Activated naive CD4-positive, alpha-beta T cell treated with anti-CD3 and anti-CD28 coated beads for 36 hours (primary cell): ENCODE measurements at regions of chr21 and their contacts with region 1.

Region 1: DNA sequence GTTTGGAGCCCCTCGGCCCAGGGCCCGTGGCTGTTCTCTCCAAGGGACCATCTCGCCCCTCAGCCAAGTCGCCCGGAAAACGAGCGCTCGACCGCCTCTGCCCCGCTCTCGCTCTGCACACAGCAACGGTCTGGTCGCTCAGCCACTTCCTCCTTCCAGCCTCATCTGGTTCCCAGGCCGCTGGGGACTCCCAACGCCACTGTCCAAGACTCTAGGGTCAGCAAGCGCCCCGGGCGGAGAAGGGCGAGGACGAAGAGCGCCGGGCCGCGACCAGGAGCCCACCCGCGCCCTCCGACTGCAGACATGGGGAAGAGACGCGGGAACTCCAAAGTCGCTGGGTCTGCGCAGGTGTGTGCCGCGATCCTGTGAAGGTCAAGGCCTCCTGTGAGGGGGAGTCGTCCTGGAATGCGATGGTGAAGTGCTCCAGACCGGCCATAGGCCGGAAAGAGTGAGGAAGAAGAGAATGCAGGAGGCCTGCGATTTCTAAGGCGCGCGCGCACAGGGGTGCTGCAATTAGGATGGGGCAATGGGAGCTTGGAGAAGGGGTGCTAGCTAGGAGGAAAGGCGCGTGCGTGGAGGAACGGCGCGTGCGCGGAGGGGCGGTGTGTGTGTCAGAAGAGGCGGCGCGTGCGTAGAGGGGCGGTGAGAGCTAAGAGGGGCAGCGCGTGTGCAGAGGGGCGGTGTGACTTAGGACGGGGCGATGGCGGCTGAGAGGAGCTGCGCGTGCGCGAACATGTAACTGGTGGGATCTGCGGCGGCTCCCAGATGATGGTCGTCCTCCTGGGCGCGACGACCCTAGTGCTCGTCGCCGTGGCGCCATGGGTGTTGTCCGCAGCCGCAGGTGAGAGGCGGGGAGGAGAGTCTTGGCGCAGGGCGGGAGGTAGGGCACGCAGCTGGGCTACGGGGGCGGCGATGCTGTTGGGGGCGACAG is at the start of gene IFNAR1:
- DNase-seq: peak; percentile 99
- H3K4me3 Mint-ChIP-seq: no peak within 1 kb of the TSS
- H3K27ac Mint-ChIP-seq: no peak within 1 kb of the TSS
- H3K4me1 Mint-ChIP-seq: peaks cover 28% of the 10 kb centered on the region
- H3K27me3 Mint-ChIP-seq: no peaks in the 10 kb centered on the region
- total RNA-seq, gene IFNAR1: 20.6 to 24.3 TPM

Region 2: DNA sequence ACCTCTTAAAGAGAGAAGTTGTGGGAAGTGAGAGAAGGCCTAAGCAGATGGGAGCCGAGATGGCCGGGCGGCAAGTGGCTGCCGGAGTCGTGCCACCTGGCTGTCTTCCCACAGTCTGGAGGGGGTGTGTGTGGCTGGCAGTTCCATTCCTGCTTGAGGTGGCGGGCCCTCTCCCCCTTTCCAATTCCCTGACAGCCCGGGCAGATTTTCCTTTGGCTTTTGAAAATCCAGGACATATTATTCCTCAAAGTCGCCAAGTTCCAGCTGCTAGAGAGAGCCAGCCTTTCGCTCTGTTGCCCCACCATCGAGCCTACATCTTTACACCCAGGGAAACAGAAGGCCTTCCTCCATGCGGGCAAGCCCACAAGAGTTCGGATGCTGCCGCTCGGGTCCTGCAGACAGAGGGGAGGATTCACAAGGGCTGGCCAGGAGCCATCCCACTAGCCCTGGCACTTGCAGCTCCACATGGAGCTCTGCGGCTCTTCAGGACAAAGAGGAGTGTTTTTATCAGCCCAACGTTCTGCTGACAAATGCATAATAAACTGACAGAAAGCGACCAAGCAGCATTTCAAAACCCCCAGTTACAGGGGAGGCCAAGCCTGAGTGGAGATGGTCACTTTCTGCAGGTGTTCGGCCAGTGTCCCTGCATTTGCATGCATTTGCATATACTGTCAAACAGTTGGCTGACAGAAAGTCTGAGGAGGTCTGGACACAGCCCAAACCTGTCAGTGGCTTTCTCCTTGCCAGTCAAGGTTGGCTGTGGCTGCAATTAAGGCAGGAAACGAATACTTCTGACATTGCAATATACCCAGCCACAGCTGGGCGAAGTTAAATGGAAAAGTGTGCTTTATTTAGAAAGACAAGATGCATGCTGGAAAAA is 208.7 kb before region 1 on chr21:
- CTCF ChIA-PET with region 1: no interaction called
- intact Hi-C with region 1: no loop called
- DNase-seq: no peak
- H3K4me3 Mint-ChIP-seq: no peak overlapping the region
- H3K27ac Mint-ChIP-seq: no peak overlapping the region
- H3K4me1 Mint-ChIP-seq: peaks cover 20% of the 10 kb centered on the region
- H3K27me3 Mint-ChIP-seq: no peaks in the 10 kb centered on the region

Region 3: DNA sequence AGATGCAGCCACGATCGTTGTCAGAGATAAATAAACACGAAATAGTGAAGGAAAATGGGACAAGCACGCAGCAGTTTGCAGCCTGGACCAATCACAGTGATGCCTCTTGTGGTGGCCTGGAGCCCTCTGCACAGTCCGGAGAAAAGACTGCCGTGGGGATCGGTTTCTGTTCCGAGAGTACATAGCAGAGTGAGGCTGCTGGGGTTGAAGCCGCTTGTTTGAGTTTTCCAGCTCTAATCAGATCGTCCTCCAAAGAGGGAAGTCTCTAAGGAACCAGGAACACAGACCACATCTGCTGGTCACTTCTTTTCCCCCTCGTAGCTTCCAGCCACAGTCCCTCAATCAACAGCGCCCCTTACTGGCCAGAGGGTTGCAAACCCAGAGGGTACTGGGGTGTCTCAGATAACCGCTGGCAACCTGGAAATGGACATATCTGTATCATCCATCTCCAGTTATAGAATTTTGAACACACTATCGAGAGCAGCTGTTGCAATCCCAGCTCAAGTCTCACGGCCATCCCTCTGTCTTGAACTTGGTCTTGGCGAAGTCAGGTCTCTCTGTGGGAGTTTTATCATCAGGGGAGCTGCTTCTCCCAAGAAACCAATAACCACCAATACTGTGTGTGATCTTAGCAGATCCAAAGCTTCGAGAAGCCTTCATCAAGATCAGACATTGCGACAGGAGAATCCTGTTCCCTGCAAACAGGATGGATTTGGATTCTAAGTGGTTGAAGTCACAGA is 197.2 kb before region 1 on chr21:
- CTCF ChIA-PET with region 1: no interaction called
- intact Hi-C with region 1: no loop called
- DNase-seq: peak; percentile 84
- H3K4me3 Mint-ChIP-seq: peak overlapping the region; percentile 55
- H3K27ac Mint-ChIP-seq: no peak overlapping the region
- H3K4me1 Mint-ChIP-seq: peaks cover 4% of the 10 kb centered on the region
- H3K27me3 Mint-ChIP-seq: no peaks in the 10 kb centered on the region

Region 4: GRCh38 chr21:33229784-33230544 is 94.6 kb before region 1 on chr21 and contains the start of gene IFNAR2:
- CTCF ChIA-PET with region 1: no interaction called
- intact Hi-C with region 1: loop called (anchors 1 kb)
- DNase-seq: peak; percentile 73
- H3K4me3 Mint-ChIP-seq: peak within 1 kb of the TSS; percentile 89
- H3K27ac Mint-ChIP-seq: peak within 1 kb of the TSS; percentile 92
- H3K4me1 Mint-ChIP-seq: peaks cover 52% of the 10 kb centered on the region
- H3K27me3 Mint-ChIP-seq: no peaks in the 10 kb centered on the region
- total RNA-seq, gene IFNAR2: 16.6 to 19.4 TPM

Region 5: DNA sequence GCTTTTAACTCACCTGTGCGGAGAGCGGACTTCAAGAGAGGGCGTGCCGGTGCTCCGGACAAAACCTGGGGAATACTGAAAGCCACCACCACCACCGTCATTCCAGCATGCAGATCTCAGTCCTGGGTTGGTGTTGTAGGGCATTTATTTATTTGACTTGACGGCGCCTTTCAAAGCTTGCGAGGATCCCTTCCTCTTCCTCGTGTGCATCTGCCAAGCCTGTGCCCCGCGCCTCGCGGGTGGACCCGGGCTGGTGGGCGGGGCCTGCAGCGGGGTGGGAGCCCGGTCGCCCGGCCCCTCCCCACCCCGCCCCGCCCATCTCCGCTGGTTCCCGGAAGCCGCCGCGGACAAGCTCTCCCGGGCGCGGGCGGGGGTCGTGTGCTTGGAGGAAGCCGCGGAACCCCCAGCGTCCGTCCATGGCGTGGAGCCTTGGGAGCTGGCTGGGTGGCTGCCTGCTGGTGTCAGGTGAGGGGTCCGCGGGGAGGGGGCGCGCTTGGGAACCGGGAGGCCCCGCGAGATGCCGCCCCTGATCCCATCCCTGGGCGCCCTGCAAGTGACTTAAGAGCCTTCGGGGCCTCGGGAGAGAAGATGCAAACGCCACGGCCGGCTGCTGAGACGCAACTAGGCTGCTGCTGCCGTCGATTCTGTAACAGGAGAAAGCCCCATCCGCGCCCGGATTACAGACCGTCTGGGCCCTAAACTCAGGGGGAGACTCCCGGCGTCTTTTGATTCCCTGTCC is 58.3 kb before region 1 on chr21 and contains the start of gene IL10RB:
- CTCF ChIA-PET with region 1: interaction called, 3 read pairs
- intact Hi-C with region 1: loop called (anchors 2 kb)
- DNase-seq: peak; percentile 65
- H3K4me3 Mint-ChIP-seq: peak within 1 kb of the TSS; percentile 99
- H3K27ac Mint-ChIP-seq: peak within 1 kb of the TSS; percentile 95
- H3K4me1 Mint-ChIP-seq: peaks cover 49% of the 10 kb centered on the region
- H3K27me3 Mint-ChIP-seq: no peaks in the 10 kb centered on the region
- total RNA-seq, gene IL10RB: 23.9 TPM

Region 6: DNA sequence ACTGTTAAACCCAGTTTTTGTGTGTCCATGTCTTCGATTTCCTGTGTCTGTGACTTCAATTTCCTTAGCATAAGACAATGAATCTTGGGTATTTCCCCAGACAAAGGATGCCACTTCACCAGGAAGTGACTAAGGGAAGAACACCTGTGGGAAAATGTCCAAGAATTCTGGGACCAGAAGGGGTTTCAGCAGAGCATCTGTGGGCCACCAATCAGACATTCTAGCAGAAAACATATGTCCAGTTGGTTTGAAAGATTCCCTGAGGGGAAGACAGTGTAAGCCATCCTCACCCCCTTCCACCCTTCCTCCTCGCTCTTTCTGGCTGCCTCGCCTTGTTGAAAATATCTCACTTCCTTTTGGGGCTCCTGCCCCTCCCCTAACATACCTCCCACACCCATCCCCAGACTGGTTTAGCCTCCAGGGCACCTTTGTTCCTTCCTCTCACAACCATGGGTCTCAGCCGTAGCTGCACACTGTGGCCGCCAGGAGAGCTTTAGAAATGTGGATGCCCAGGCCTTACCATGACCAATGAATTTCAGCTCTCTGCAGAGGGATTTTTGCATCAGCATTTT is 25.3 kb before region 1 on chr21:
- CTCF ChIA-PET with region 1: interaction called, 4 read pairs
- intact Hi-C with region 1: loop called (anchors 1 kb)
- DNase-seq: peak; percentile 61
- H3K4me3 Mint-ChIP-seq: peak overlapping the region; percentile 33
- H3K27ac Mint-ChIP-seq: peak overlapping the region; percentile 61
- H3K4me1 Mint-ChIP-seq: peaks cover 48% of the 10 kb centered on the region
- H3K27me3 Mint-ChIP-seq: no peaks in the 10 kb centered on the region

Region 7: GRCh38 chr21:33394260-33394659 is 69.7 kb after region 1 on chr21:
- CTCF ChIA-PET with region 1: no interaction called
- intact Hi-C with region 1: no loop called
- DNase-seq: no peak
- H3K4me3 Mint-ChIP-seq: no peak overlapping the region
- H3K27ac Mint-ChIP-seq: no peak overlapping the region
- H3K4me1 Mint-ChIP-seq: no peaks in the 10 kb centered on the region
- H3K27me3 Mint-ChIP-seq: peaks cover 2% of the 10 kb centered on the region